Dorsolateral prefrontal cortex (tissue), 120 donors: ENCODE measurements at regions of chr16 and their contacts with region 1.

Region 1: GRCh38 chr16:57167953-57168352 is 17.9 kb downstream of the PSME3IP1 start:
- DNase-seq: no peak
- H3K4me3 ChIP-seq: peak overlapping the region in 9 of 59 donors; percentile 1 to 33 (median 17)
- H3K27ac ChIP-seq: peak overlapping the region in 54 of 59 donors; percentile 24 to 89 (median 78)
- H3K27me3 ChIP-seq: no peaks in the 10 kb centered on the region
- CTCF ChIP-seq: peak; percentile 30 to 91 (median 76)

Region 2: DNA sequence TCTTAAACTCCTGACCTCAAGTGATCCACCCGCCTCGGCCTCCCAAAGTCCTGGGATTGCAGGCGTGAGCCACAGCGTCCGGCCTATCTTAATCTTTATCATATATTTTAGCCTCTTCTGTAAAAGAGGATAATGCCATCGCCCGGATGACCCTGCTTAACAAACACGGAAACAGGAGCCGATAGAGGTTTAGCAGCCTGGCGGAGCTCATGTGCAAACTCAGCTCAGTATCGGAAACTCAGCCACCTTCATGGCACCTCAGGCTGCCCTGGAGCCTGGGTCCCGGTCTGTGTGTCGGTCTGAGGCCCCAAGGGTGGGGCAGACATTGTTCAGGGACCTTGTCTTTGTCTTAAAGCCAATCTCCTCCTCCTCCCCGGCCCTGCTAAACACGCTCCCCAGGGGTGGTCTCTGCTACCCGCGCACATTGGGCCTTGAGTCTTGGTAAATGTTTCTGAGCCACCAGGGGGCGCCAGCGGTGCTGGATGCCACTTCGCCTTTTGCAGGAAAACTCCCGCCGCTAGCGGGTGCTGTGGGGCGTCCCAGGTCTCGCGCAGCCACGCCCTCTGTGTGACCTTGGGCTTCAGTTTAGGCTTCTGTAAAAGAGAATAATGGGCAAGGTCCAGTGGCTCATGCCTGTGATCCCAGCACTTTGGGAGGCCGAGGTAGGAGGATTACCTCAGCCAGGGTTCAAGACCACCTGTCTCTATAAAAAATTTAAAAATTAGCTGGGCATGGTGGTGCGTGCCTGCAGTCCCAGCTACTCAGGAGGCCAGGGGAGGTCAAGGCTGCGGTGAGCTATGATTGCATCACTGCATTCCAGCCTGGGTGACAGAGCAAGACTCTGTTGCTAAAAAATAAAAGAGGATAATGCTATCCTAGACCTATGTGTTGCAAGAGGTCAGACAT is 203.5 kb before region 1 on chr16:
- intact Hi-C with region 1: loop called in 1 of 2 experiments (anchors 10 kb)
- DNase-seq: peak; percentile 12 to 75 (median 64)
- H3K4me3 ChIP-seq: no peak overlapping the region
- H3K27ac ChIP-seq: peak overlapping the region in 16 of 59 donors; percentile 1 to 55 (median 36)
- H3K27me3 ChIP-seq: no peaks in the 10 kb centered on the region
- CTCF ChIP-seq: peak; percentile 61 to 88 (median 81)

Region 3: GRCh38 chr16:57134982-57135381 is 33.0 kb before region 1 on chr16:
- intact Hi-C with region 1: loop called in 1 of 2 experiments (anchors 5 kb)
- DNase-seq: peak in 1 of 10 donors; percentile 12
- H3K4me3 ChIP-seq: no peak overlapping the region
- H3K27ac ChIP-seq: peak overlapping the region in 35 of 59 donors; percentile 12 to 100 (median 93)
- H3K27me3 ChIP-seq: no peaks in the 10 kb centered on the region
- CTCF ChIP-seq: no peak